Activated naive CD4-positive, alpha-beta T cell treated with anti-CD3 and anti-CD28 coated beads for 36 hours (primary cell): ENCODE measurements at regions of chr11 and their contacts with region 1.

Region 1: GRCh38 chr11:95699631-95700470 is 89.7 kb downstream of the FAM76B start:
- DNase-seq: no peak
- H3K4me3 Mint-ChIP-seq: peak overlapping the region; percentile 65
- H3K27ac Mint-ChIP-seq: peak overlapping the region; percentile 92
- H3K4me1 Mint-ChIP-seq: peaks cover 53% of the 10 kb centered on the region
- H3K27me3 Mint-ChIP-seq: no peaks in the 10 kb centered on the region

Region 2: GRCh38 chr11:95119374-95120060 is 580.3 kb before region 1 on chr11:
- CTCF ChIA-PET with region 1: no interaction called
- intact Hi-C with region 1: no loop called
- DNase-seq: no peak
- H3K4me3 Mint-ChIP-seq: no peak overlapping the region
- H3K27ac Mint-ChIP-seq: no peak overlapping the region
- H3K4me1 Mint-ChIP-seq: peaks cover 5% of the 10 kb centered on the region
- H3K27me3 Mint-ChIP-seq: no peaks in the 10 kb centered on the region

Region 3: GRCh38 chr11:95337175-95337957 is 362.5 kb before region 1 on chr11:
- CTCF ChIA-PET with region 1: interaction called, 5 read pairs
- intact Hi-C with region 1: loop called (anchors 2 kb)
- DNase-seq: peak; percentile 69
- H3K4me3 Mint-ChIP-seq: no peak overlapping the region
- H3K27ac Mint-ChIP-seq: no peak overlapping the region
- H3K4me1 Mint-ChIP-seq: peaks cover 4% of the 10 kb centered on the region
- H3K27me3 Mint-ChIP-seq: no peaks in the 10 kb centered on the region

Region 4: GRCh38 chr11:95453616-95454171 is 246.2 kb before region 1 on chr11:
- CTCF ChIA-PET with region 1: interaction called, 3 read pairs
- intact Hi-C with region 1: loop called (anchors 5 kb)
- DNase-seq: no peak
- H3K4me3 Mint-ChIP-seq: no peak overlapping the region
- H3K27ac Mint-ChIP-seq: no peak overlapping the region
- H3K4me1 Mint-ChIP-seq: peaks cover 3% of the 10 kb centered on the region
- H3K27me3 Mint-ChIP-seq: no peaks in the 10 kb centered on the region

Region 5: GRCh38 chr11:95661162-95661561 is 38.7 kb before region 1 on chr11:
- CTCF ChIA-PET with region 1: interaction called, 6 read pairs
- intact Hi-C with region 1: loop called (anchors 1 kb)
- DNase-seq: no peak
- H3K4me3 Mint-ChIP-seq: no peak overlapping the region
- H3K27ac Mint-ChIP-seq: no peak overlapping the region
- H3K4me1 Mint-ChIP-seq: peaks cover 26% of the 10 kb centered on the region
- H3K27me3 Mint-ChIP-seq: no peaks in the 10 kb centered on the region

Region 6: GRCh38 chr11:95680169-95680929 is 19.5 kb before region 1 on chr11:
- CTCF ChIA-PET with region 1: interaction called, 11 read pairs
- intact Hi-C with region 1: loop called (anchors 1 kb)
- DNase-seq: no peak
- H3K4me3 Mint-ChIP-seq: peak overlapping the region; percentile 32
- H3K27ac Mint-ChIP-seq: peak overlapping the region; percentile 48
- H3K4me1 Mint-ChIP-seq: peaks cover 88% of the 10 kb centered on the region
- H3K27me3 Mint-ChIP-seq: no peaks in the 10 kb centered on the region

Region 7: GRCh38 chr11:95715777-95716241 is 16.0 kb after region 1 on chr11:
- CTCF ChIA-PET with region 1: interaction called, 21 read pairs
- intact Hi-C with region 1: loop called (anchors 1 kb)
- DNase-seq: peak; percentile 64
- H3K4me3 Mint-ChIP-seq: no peak overlapping the region
- H3K27ac Mint-ChIP-seq: no peak overlapping the region
- H3K4me1 Mint-ChIP-seq: peaks cover 54% of the 10 kb centered on the region
- H3K27me3 Mint-ChIP-seq: no peaks in the 10 kb centered on the region

Region 8: DNA sequence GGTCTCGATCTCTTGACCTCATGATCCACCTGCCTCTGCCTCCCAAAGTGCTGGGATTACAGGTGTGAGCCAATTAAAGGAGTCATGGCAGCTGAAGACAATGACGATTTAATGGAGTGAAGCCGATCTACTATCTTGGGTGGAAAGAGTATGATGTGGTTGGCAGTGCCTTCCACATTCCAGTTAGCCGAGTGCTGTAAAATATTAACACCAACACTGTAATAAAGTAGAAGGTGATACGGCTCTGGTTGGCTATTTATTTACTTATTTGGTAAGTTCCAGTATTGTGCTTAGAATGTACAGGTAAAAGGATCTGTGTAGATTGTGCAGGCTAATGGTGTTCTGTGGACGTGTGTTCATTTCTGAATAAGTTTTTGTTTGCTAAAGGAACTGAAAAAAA is 373.7 kb after region 1 on chr11:
- CTCF ChIA-PET with region 1: no interaction called
- intact Hi-C with region 1: no loop called
- DNase-seq: no peak
- H3K4me3 Mint-ChIP-seq: no peak overlapping the region
- H3K27ac Mint-ChIP-seq: peak overlapping the region; percentile 93
- H3K4me1 Mint-ChIP-seq: peaks cover 73% of the 10 kb centered on the region
- H3K27me3 Mint-ChIP-seq: no peaks in the 10 kb centered on the region